ENCODE measurements at regions of chr17 and their contacts with region 1.

Region 1: GRCh38 chr17:49707608-49708514 is at the start of gene SLC35B1:
- DNase-seq: peak; percentile 97 to 99 (median 98)
- H3K4me3 ChIP-seq: peak within 1 kb of the TSS; percentile 70 to 86
- H3K4me3 Mint-ChIP-seq: peak within 1 kb of the TSS; percentile 93 to 97 (median 96)
- H3K27ac ChIP-seq: peak within 1 kb of the TSS; percentile 90
- H3K27ac Mint-ChIP-seq: peak within 1 kb of the TSS; percentile 95 to 99 (median 98)
- H3K4me1 ChIP-seq: peaks cover 33% of the 10 kb centered on the region
- H3K4me1 Mint-ChIP-seq: peaks cover 35 to 51% (median 45%) of the 10 kb centered on the region in 4 donors
- H3K27me3 ChIP-seq: no peaks in the 10 kb centered on the region
- H3K27me3 Mint-ChIP-seq: no peaks in the 10 kb centered on the region
- total RNA-seq, gene SLC35B1: 48.4 to 52.1 TPM

Region 2: DNA sequence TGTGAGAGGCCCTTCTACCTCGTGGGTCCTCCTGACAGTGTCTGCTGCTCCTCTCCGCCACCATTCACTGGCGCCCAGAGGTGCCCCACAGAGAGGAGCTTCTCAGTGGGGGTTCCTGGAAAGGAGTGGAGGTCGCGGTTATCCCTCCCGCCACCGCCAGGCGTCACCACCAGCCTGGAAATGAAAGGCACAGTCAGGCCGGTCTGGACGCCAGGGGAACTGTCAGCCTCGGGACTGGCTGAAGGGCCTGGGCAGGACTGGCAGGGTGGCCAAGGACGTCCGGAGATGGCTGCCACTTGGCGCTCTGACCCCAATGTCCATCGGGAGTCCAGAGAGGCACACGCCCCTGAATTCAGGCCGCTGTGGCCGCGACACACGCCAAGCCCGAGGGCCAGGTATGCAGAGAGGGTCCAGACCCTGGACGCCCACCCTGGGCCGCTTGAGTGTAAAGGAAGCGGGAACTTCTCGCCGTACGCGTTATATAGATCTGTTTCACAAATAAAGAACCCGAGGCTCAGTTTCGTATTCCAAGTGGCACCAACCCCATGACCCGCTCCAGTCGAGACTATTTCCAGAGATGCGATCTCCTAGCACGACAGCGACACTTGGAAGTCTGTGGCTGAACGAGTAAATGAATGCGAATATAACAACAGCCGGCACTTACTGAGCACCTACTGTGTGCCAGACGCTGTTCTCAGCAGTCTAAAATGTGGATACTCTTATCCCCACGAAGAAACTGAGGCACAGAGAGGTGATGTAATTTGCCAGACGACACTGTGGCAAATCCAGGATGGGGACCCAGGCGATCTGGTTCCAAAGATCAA is 139.8 kb before region 1 on chr17:
- CTCF ChIA-PET with region 1: interaction called, 219 read pairs
- POLR2A ChIA-PET with region 1: interaction called, 17 read pairs
- intact Hi-C with region 1: loop called (anchors 1 kb)
- DNase-seq: peak; percentile 68 to 77 (median 74)
- H3K4me3 ChIP-seq: peak overlapping the region in 1 of 2 donors; percentile 56
- H3K4me3 Mint-ChIP-seq: peak overlapping the region; percentile 28 to 82 (median 60)
- H3K27ac ChIP-seq: no peak overlapping the region
- H3K27ac Mint-ChIP-seq: peak overlapping the region in 2 of 7 donors; percentile 46 to 54
- H3K4me1 ChIP-seq: peaks cover 10% of the 10 kb centered on the region
- H3K4me1 Mint-ChIP-seq: peaks cover 8 to 29% (median 19%) of the 10 kb centered on the region in 4 donors
- H3K27me3 ChIP-seq: no peaks in the 10 kb centered on the region
- H3K27me3 Mint-ChIP-seq: peaks cover 6 to 11% of the 10 kb centered on the region in 2 donors

Region 3: DNA sequence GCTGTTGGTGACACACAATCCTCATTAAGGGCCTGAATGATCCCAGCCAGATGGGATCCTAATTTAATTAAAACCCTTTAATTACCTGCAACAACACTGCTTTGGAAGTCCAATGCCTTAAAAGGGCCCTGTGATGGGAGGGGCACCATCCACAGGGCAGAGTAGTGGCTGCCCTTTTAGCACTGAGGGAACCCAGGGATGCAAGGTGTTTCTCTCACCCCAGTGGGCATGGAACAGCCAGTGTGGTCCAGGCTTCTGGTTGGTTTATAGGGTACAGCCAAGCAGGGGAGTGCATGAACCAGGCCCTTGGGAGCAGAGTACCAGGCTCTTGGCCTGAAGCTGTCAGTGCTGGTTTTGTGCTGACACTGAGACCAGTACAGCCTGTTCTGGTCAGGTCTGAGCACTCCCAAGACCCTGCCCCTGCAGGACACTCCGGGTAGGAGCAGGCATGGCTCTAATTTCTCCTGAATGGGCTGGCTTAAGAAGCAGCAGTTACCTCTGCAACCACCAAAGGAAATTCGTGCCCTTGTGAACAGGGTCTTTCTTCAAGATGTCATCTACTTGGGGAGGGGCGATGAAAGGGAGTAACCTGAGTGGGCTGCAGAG is 122.3 kb before region 1 on chr17:
- CTCF ChIA-PET with region 1: no interaction called
- POLR2A ChIA-PET with region 1: no interaction called
- intact Hi-C with region 1: no loop called
- DNase-seq: no peak
- H3K4me3 ChIP-seq: no peak overlapping the region
- H3K4me3 Mint-ChIP-seq: peak overlapping the region in 1 of 8 donors; percentile 36
- H3K27ac ChIP-seq: no peak overlapping the region
- H3K27ac Mint-ChIP-seq: no peak overlapping the region
- H3K4me1 ChIP-seq: no peaks in the 10 kb centered on the region
- H3K4me1 Mint-ChIP-seq: peaks cover 0 to 12% (median 5%) of the 10 kb centered on the region in 4 donors
- H3K27me3 ChIP-seq: no peaks in the 10 kb centered on the region
- H3K27me3 Mint-ChIP-seq: no peaks in the 10 kb centered on the region

Region 4: GRCh38 chr17:49659661-49660382 is 48.0 kb before region 1 on chr17:
- CTCF ChIA-PET with region 1: no interaction called
- POLR2A ChIA-PET with region 1: no interaction called
- intact Hi-C with region 1: no loop called
- DNase-seq: no peak
- H3K4me3 ChIP-seq: no peak overlapping the region
- H3K4me3 Mint-ChIP-seq: peak overlapping the region in 3 of 8 donors; percentile 3 to 60 (median 13)
- H3K27ac ChIP-seq: no peak overlapping the region
- H3K27ac Mint-ChIP-seq: peak overlapping the region in 5 of 7 donors; percentile 18 to 50 (median 31)
- H3K4me1 ChIP-seq: peaks cover 34% of the 10 kb centered on the region
- H3K4me1 Mint-ChIP-seq: peaks cover 38 to 52% (median 47%) of the 10 kb centered on the region in 4 donors
- H3K27me3 ChIP-seq: no peaks in the 10 kb centered on the region
- H3K27me3 Mint-ChIP-seq: no peaks in the 10 kb centered on the region

Region 5: DNA sequence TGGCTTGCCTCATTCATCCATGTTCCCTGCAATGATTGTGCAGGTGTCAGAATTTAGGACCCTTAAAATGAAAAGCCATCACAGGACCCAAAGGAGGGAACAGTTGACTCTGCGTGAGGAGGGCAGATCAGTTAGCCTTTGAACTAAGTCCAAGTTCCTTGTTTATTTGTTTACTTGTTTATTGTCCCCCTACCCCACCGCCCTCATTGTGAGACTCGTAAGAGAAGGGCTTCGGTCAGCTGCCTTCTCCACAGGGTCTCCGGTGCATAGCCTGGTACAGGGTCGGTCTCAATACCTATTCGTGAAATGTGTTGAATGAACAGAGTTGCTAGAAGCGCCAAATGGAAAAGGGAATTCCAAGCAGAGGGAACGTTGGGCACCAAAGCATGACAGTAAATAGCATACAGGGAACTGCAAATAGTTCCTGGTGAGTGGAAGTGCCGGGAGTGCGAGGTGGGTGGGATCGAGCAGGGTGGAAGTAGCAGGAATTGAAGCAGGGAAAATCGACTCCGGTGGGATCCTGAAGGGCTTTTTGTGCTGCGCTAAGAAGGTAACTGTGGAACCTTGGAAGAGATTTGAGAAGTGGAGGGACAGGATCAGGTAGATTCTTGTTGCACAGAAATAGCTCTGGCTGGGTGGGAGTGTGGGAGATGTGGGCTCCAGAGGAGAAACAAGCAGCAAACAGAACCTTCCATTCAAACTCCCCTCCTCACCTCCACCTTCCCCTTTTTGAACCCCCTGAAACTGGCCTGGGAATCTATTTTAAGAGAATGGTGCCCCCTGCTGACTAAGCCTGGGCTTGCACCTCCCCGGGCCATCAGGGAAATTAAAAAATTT is 12.8 kb before region 1 on chr17:
- CTCF ChIA-PET with region 1: interaction called, 38 read pairs
- POLR2A ChIA-PET with region 1: interaction called, 7 read pairs
- intact Hi-C with region 1: no loop called
- DNase-seq: peak; percentile 52 to 70 (median 61)
- H3K4me3 ChIP-seq: no peak overlapping the region
- H3K4me3 Mint-ChIP-seq: peak overlapping the region in 3 of 8 donors; percentile 1 to 41 (median 4)
- H3K27ac ChIP-seq: no peak overlapping the region
- H3K27ac Mint-ChIP-seq: peak overlapping the region; percentile 65 to 90 (median 83)
- H3K4me1 ChIP-seq: peaks cover 19% of the 10 kb centered on the region
- H3K4me1 Mint-ChIP-seq: peaks cover 22 to 51% (median 30%) of the 10 kb centered on the region in 4 donors
- H3K27me3 ChIP-seq: no peaks in the 10 kb centered on the region
- H3K27me3 Mint-ChIP-seq: no peaks in the 10 kb centered on the region

Region 6: GRCh38 chr17:49739641-49740271 is 31.9 kb after region 1 on chr17:
- CTCF ChIA-PET with region 1: interaction called, 51 read pairs
- POLR2A ChIA-PET with region 1: interaction called, 233 read pairs
- intact Hi-C with region 1: loop called (anchors 1 kb)
- DNase-seq: peak; percentile 96 to 100 (median 99)
- H3K4me3 ChIP-seq: peak overlapping the region; percentile 32 to 80
- H3K4me3 Mint-ChIP-seq: peak overlapping the region; percentile 93 to 99 (median 97)
- H3K27ac ChIP-seq: peak overlapping the region; percentile 99
- H3K27ac Mint-ChIP-seq: peak overlapping the region; percentile 99 to 100 (median 100)
- H3K4me1 ChIP-seq: peaks cover 97% of the 10 kb centered on the region
- H3K4me1 Mint-ChIP-seq: peaks cover 68 to 94% (median 78%) of the 10 kb centered on the region in 4 donors
- H3K27me3 ChIP-seq: no peaks in the 10 kb centered on the region
- H3K27me3 Mint-ChIP-seq: no peaks in the 10 kb centered on the region

Region 7: DNA sequence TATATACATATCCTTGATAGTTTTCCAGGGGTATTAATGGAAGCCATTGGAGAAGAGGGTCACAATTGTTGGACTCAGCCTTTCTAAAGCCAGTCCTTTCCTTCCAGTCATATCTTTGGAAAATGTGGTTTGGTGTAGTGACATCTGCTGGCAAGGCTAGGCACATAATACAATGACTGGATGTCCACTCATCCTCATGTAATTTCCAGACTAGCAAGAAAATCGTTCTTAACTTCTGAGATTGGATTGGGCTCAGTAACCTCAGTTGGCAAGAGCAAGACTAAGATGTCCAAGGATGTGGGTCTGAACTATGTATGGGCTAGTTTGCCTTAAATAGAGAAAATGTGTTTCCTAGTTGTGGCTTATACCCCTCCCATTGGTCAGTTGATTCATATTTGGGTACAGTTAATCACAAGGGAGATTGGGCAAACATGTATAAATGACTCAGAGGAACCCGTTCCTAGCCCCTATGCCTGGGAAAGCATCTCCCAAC is 71.9 kb after region 1 on chr17:
- CTCF ChIA-PET with region 1: interaction called, 56 read pairs
- POLR2A ChIA-PET with region 1: interaction called, 13 read pairs
- intact Hi-C with region 1: loop called (anchors 1 kb)
- DNase-seq: peak in 4 of 5 donors; percentile 17 to 40 (median 35)
- H3K4me3 ChIP-seq: no peak overlapping the region
- H3K4me3 Mint-ChIP-seq: no peak overlapping the region
- H3K27ac ChIP-seq: no peak overlapping the region
- H3K27ac Mint-ChIP-seq: peak overlapping the region in 2 of 7 donors; percentile 35 to 57
- H3K4me1 ChIP-seq: peaks cover 7% of the 10 kb centered on the region
- H3K4me1 Mint-ChIP-seq: peaks cover 3 to 15% (median 3%) of the 10 kb centered on the region in 4 donors
- H3K27me3 ChIP-seq: no peaks in the 10 kb centered on the region
- H3K27me3 Mint-ChIP-seq: no peaks in the 10 kb centered on the region

Region 8: GRCh38 chr17:49851387-49852291 is 143.8 kb after region 1 on chr17:
- CTCF ChIA-PET with region 1: interaction called, 6 read pairs
- POLR2A ChIA-PET with region 1: interaction called, 3 read pairs
- intact Hi-C with region 1: loop called (anchors 2 kb)
- DNase-seq: peak; percentile 66 to 79 (median 69)
- H3K4me3 ChIP-seq: peak overlapping the region; percentile 60 to 87
- H3K4me3 Mint-ChIP-seq: peak overlapping the region; percentile 88 to 95 (median 92)
- H3K27ac ChIP-seq: peak overlapping the region; percentile 54
- H3K27ac Mint-ChIP-seq: peak overlapping the region; percentile 89 to 98 (median 95)
- H3K4me1 ChIP-seq: peaks cover 16% of the 10 kb centered on the region
- H3K4me1 Mint-ChIP-seq: peaks cover 12 to 31% (median 20%) of the 10 kb centered on the region in 4 donors
- H3K27me3 ChIP-seq: no peaks in the 10 kb centered on the region
- H3K27me3 Mint-ChIP-seq: peaks cover 0 to 2% of the 10 kb centered on the region in 2 donors

Measured in CD4-positive, alpha-beta memory T cell (primary cell).